Activated naive CD4-positive, alpha-beta T cell treated with anti-CD3 and anti-CD28 coated beads, Interleukin-2, amount 10 ng/mL, durations not matched to agents 7 days and 5 days (primary cell): ENCODE measurements at regions of chr16 and their contacts with region 1.

Region 1: GRCh38 chr16:67816240-67817031 is 9.7 kb downstream of the TSNAXIP1 start:
- DNase-seq: peak; percentile 91
- H3K4me3 Mint-ChIP-seq: no peak overlapping the region
- H3K27ac Mint-ChIP-seq: no peak overlapping the region
- H3K4me1 Mint-ChIP-seq: peaks cover 6% of the 10 kb centered on the region
- H3K27me3 Mint-ChIP-seq: peaks cover 24% of the 10 kb centered on the region

Region 2: DNA sequence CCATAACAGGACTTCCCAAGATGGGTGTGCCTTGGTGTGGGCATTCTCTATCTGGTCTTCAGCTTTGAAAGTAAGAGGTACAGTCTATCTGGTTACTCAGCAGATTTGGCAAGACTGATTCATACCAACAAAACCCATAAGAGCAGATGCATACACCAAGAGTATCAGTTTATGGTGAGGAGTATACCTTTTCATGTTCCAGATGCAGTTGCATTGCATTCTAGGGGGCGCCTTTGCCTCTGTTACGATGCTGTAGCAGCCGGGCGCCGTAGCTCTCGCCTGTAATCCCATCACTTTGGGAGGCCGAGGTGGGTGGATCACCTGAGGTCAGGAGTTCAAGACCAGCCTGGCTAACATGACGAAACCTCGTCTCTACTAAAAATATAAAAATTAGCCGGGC is 202.6 kb before region 1 on chr16:
- CTCF ChIA-PET with region 1: no interaction called
- DNase-seq: peak; percentile 25
- H3K4me3 Mint-ChIP-seq: no peak overlapping the region
- H3K27ac Mint-ChIP-seq: no peak overlapping the region
- H3K4me1 Mint-ChIP-seq: no peaks in the 10 kb centered on the region
- H3K27me3 Mint-ChIP-seq: no peaks in the 10 kb centered on the region

Region 3: DNA sequence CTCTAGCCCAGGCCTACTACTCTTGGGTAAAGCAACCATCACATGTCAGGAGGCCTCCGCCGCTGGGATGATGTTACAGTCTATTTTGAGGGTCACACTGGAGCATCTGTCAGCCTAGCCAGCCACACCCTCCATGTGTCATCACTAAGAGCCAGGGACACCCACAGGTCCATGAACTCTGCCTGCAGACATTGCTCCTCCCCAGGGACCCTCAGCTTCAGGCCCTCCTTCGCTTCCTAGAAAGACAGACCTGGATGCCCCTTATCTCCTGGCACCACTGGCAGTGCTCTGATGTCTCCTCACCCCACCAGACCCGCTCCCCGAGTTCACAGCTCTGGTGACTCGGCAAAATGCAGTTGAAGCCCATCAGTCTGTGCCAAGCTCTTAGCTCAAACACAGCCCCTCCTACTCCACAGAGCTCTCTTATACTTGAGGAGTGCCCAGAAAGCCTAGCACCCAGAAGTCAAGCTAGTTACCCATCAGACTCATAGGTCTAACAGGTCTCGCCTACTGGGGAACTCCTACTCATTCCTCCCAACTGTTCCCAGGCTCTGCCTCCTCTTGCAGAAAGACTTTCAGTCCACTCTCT is 16.0 kb before region 1 on chr16:
- CTCF ChIA-PET with region 1: interaction called, 12 read pairs
- DNase-seq: no peak
- H3K4me3 Mint-ChIP-seq: no peak overlapping the region
- H3K27ac Mint-ChIP-seq: peak overlapping the region; percentile 86
- H3K4me1 Mint-ChIP-seq: peaks cover 61% of the 10 kb centered on the region
- H3K27me3 Mint-ChIP-seq: no peaks in the 10 kb centered on the region

Region 4: DNA sequence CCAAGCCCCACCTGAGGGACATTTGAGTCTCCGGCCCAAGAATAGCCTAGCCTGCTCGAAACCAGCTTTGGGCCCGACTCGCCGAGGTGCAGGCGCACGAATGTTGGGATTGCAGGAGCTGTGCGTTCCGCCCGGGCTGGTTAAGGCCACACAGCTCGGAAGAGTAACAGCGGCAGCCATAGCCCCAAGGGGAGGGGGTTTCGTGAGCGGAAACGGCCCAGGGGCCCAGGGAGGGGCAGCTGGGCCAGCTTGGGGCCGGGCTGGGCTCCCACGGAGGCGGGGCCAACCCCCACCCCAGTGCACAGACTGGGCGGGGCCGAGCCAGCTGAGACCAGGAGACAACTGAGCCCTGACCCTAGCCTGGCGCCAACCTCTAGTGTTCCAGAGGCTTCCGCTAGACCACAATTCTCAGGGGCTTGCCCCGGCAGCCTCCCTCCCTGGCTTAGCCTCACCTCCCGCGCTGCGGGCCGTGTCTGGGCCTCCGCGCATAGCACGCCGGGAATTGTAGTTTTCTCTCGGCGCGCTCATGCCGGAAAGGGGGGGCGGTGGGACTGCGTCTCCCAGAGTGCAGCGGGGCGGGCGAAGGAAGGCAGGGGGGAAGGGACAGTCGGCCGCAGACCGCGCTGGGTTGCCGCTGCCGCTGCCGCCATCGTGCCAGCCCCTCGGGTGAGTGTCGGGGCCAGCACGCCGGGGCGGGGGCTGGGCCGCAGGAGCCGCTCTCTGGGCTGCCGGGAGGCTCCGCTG is 30.1 kb after region 1 on chr16 and contains the start of gene NUTF2:
- CTCF ChIA-PET with region 1: interaction called, 30 read pairs
- DNase-seq: peak; percentile 97
- H3K4me3 Mint-ChIP-seq: peak within 1 kb of the TSS; percentile 95
- H3K27ac Mint-ChIP-seq: peak within 1 kb of the TSS; percentile 88
- H3K4me1 Mint-ChIP-seq: peaks cover 59% of the 10 kb centered on the region
- H3K27me3 Mint-ChIP-seq: no peaks in the 10 kb centered on the region

Region 5: DNA sequence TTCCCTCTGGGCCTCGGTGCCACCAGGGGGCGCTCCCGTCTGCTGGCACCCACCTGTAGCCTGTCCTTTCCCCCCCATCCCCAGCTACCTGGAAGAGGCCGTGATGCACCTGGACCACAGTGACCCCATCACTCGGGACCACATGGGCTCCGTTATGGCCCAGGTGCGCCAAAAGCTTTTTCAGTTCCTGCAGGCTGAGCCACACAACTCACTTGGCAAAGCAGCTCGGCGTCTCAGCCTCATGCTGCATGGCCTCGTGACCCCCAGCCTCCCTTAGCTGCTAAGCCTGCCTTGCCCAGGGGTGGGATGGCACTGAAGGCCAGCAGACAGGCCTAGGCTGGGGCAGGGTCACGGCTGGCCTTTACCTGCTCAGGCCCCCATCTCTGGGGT is 67.4 kb after region 1 on chr16:
- CTCF ChIA-PET with region 1: interaction called, 12 read pairs
- DNase-seq: peak; percentile 80
- H3K4me3 Mint-ChIP-seq: no peak overlapping the region
- H3K27ac Mint-ChIP-seq: peak overlapping the region; percentile 45
- H3K4me1 Mint-ChIP-seq: no peaks in the 10 kb centered on the region
- H3K27me3 Mint-ChIP-seq: no peaks in the 10 kb centered on the region

Region 6: GRCh38 chr16:67928561-67929364 is 112.3 kb after region 1 on chr16:
- CTCF ChIA-PET with region 1: interaction called, 16 read pairs
- DNase-seq: peak; percentile 88
- H3K4me3 Mint-ChIP-seq: no peak overlapping the region
- H3K27ac Mint-ChIP-seq: peak overlapping the region; percentile 58
- H3K4me1 Mint-ChIP-seq: peaks cover 4% of the 10 kb centered on the region
- H3K27me3 Mint-ChIP-seq: no peaks in the 10 kb centered on the region

Region 7: GRCh38 chr16:67968400-67969253 is 152.2 kb after region 1 on chr16 and contains the start of gene SLC12A4:
- CTCF ChIA-PET with region 1: no interaction called
- DNase-seq: peak; percentile 92
- H3K4me3 Mint-ChIP-seq: peak within 1 kb of the TSS; percentile 100
- H3K27ac Mint-ChIP-seq: peak within 1 kb of the TSS; percentile 93
- H3K4me1 Mint-ChIP-seq: peaks cover 33% of the 10 kb centered on the region
- H3K27me3 Mint-ChIP-seq: peaks cover 23% of the 10 kb centered on the region

Region 8: GRCh38 chr16:68040507-68041288 is 224.3 kb after region 1 on chr16:
- CTCF ChIA-PET with region 1: interaction called, 14 read pairs
- DNase-seq: peak; percentile 94
- H3K4me3 Mint-ChIP-seq: no peak overlapping the region
- H3K27ac Mint-ChIP-seq: peak overlapping the region; percentile 76
- H3K4me1 Mint-ChIP-seq: peaks cover 23% of the 10 kb centered on the region
- H3K27me3 Mint-ChIP-seq: no peaks in the 10 kb centered on the region

Region 9: DNA sequence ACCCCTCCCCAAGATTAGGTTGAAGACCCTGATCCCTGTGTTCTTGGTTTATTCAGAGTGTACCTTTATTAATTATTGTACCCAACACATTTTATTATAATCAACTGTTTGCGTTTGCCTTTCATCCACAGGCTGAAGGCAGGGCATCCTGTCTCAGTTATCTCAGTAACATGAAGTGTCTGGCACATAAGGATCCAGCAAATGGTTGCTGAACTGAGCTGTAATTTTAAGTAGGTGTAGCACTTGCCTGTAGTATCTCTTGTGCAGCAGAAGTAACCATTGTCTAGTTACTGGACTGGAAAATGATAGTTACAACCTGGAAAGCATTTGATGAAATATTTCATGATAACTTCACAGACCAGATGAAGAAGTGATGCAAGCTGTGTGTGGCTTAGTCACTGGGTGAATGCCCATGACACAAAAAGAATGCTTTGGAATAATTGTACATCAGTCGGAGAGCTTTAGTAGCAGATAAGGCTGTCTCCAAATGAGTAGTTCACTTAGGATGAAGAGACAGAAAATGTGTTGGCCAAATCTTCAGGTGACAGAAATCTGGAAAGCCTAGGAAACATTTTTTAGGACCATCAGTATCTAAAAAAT is 362.9 kb after region 1 on chr16:
- CTCF ChIA-PET with region 1: no interaction called
- DNase-seq: no peak
- H3K4me3 Mint-ChIP-seq: no peak overlapping the region
- H3K27ac Mint-ChIP-seq: no peak overlapping the region
- H3K4me1 Mint-ChIP-seq: peaks cover 4% of the 10 kb centered on the region
- H3K27me3 Mint-ChIP-seq: no peaks in the 10 kb centered on the region